ENCODE measurements at regions of chr5 and their contacts with region 1.

Region 1: DNA sequence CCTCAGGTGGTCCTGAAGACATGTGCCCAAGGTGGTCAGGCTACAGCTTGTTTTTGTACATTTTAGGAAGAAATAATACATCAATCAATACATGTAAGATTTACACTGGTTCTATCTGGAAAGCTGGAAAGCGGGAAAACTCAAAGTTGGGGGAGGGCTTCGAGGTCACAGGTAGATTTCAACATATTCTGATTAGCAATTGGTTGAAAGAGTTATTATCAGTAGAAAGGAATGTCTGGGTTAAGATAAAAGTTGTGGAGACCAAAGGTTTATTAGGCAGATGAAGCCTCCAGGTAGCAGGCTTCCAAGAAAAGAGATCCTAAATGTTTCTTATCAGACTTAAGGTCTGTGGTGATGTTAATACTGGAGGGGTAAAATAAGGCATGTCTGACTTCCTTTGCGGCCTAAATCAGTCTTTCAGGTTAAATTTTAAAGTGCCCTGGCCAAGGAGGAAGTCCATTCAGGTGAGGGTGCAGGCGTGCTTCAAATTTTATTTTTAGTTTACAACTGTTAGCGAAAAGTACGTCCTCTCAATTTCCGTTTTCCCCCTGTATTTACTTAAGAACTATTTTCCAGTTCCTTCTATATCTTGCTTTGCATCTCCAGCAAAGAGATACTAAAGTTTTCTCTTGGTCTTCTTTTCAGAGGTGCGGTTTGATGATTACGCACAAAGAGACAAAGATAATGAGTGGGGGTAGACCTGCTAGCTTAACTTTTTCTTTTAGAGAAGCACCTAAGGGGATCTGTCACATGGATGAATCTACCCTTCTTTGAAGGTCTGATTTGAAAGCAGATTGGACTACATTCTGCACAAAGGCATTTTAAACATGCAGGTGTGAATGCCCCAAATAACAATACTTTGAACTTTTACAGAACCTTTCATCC is 578.6 kb downstream of the RAB3C start:
- DNase-seq: peak; percentile 80 to 83
- H3K4me3 ChIP-seq: peak overlapping the region; percentile 1; the same call in 1 of the 2 replicates
- H3K4me3 Mint-ChIP-seq: peak overlapping the region; percentile 72
- H3K27ac Mint-ChIP-seq: peak overlapping the region; percentile 89
- H3K4me1 ChIP-seq: peaks cover 60% of the 10 kb centered on the region
- H3K4me1 Mint-ChIP-seq: peaks cover 34% of the 10 kb centered on the region
- H3K27me3 ChIP-seq: no peaks in the 10 kb centered on the region
- H3K27me3 Mint-ChIP-seq: no peaks in the 10 kb centered on the region
- CTCF ChIP-seq: no peak

Region 2: DNA sequence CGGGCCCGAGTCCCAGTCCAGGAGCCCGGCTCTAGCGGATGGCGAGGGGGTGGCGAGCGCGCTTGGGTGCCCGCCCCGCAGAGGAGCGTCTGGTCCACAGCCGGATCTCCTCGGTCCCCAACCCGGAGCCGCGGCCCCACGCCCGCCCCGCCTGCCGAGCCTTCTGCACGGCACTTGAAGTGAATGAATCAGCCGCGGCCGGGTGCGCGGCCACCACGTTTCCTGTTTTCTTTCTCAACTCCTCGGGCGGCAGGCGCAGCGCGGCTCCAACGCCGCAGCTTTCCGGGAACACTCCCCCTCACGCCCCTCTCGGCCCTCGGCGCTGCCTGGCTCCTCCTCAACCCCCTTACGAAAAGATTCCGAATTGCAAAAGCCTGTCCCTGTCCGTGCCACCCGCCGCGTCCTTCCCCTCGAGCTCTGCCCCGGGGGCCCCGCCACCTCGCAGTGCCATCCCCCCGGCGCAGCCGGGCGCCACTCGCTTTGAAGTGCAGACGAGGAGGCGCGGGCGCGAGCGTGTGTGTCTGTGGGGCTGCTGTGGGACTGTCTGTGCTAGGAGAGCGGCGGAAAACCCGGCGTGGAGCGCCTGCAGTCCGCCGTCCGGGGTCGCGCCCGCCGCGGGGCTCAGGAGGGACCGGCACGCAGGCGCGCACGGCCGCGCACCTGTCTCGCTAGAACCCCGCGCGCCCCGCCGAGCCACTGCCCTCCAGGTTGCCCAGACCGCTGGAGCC is 122.0 kb before region 1 on chr5:
- CTCF ChIA-PET with region 1: interaction called, 6 read pairs
- POLR2A ChIA-PET with region 1: interaction called, 4 read pairs
- intact Hi-C with region 1: loop called (anchors 1 kb)
- DNase-seq: peak; percentile 78 to 80
- H3K4me3 ChIP-seq: peak overlapping the region; percentile 95
- H3K4me3 Mint-ChIP-seq: peak overlapping the region; percentile 69
- H3K27ac Mint-ChIP-seq: peak overlapping the region; percentile 10
- H3K4me1 ChIP-seq: peaks cover 39% of the 10 kb centered on the region
- H3K4me1 Mint-ChIP-seq: peaks cover 17% of the 10 kb centered on the region
- H3K27me3 ChIP-seq: no peaks in the 10 kb centered on the region
- H3K27me3 Mint-ChIP-seq: no peaks in the 10 kb centered on the region
- CTCF ChIP-seq: no peak

Region 3: GRCh38 chr5:59188419-59189225 is 27.2 kb after region 1 on chr5:
- CTCF ChIA-PET with region 1: no interaction called
- POLR2A ChIA-PET with region 1: no interaction called
- intact Hi-C with region 1: no loop called
- DNase-seq: peak; percentile 72 to 77
- H3K4me3 ChIP-seq: no peak overlapping the region; the same call in 1 of the 2 replicates
- H3K4me3 Mint-ChIP-seq: peak overlapping the region; percentile 56
- H3K27ac Mint-ChIP-seq: no peak overlapping the region
- H3K4me1 ChIP-seq: peaks cover 6% of the 10 kb centered on the region; the same call in 1 of the 2 replicates
- H3K4me1 Mint-ChIP-seq: peaks cover 19% of the 10 kb centered on the region
- H3K27me3 ChIP-seq: no peaks in the 10 kb centered on the region
- H3K27me3 Mint-ChIP-seq: no peaks in the 10 kb centered on the region
- CTCF ChIP-seq: peak; percentile 60 to 73